HAP-1 (cell line): ENCODE measurements at regions of chr2 and their contacts with region 1.

Region 1: GRCh38 chr2:50529600-50530218 is 502.2 kb downstream of the NRXN1 start:
- DNase-seq: peak in 1 of 2 experiments; percentile 57
- H3K4me3 ChIP-seq: no peak overlapping the region
- H3K4me1 ChIP-seq: peaks cover 14% of the 10 kb centered on the region
- H3K27me3 ChIP-seq: no peaks in the 10 kb centered on the region

Region 2: DNA sequence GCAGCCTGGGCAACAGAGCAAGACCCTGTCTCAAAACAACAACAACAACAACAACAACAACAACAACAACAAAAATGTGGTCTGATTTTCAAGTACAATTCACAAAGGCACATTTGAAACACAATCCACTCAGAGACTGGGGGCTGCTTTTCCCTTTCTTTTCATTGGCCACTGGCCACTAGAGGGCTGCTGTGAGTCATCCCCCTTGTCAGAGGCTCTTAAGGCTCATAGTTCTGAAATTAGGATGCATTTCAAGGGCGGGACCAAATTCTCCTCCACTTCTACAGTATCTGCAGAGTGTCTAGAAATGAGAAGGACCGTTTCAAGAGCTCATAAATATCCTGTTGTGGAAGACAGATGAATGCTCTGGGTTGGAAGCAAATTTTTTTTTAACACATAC is 216.8 kb after region 1 on chr2:
- in situ Hi-C with region 1: loop called (anchors 25 kb)
- DNase-seq: peak; percentile 41 to 74
- H3K4me3 ChIP-seq: no peak overlapping the region
- H3K4me1 ChIP-seq: no peaks in the 10 kb centered on the region
- H3K27me3 ChIP-seq: no peaks in the 10 kb centered on the region

Region 3: DNA sequence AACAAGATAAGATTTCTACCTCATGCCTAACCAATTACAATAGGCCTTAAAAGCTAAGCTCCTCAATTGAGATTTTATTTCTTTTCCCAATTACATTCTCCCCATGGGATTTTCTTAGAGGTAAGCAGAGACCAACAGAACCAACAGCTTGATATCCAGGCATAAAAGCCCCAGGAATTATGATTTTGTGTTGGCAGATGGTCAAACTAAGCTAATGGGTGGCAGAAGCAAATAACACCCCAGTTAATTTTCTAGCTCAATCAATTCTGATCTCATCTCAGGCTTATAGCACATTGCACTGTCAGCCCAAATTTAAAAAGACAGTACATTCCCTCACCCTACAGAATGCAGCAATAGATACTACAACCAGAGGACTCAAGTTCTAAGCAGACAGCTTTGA is 345.9 kb after region 1 on chr2:
- in situ Hi-C with region 1: no loop called
- DNase-seq: no peak
- H3K4me3 ChIP-seq: no peak overlapping the region
- H3K4me1 ChIP-seq: 0 out of 2 replicates have a peak, but pooled peaks cover 2% of the 10 kb centered on the region
- H3K27me3 ChIP-seq: no peaks in the 10 kb centered on the region